Mammary epithelial cell (primary cell): ENCODE measurements at regions of chr18 and their contacts with region 1.

Region 1: GRCh38 chr18:72206814-72207213 is 337.3 kb downstream of the CBLN2 start:
- DNase-seq: no peak
- H3K4me3 ChIP-seq: no peak overlapping the region
- H3K27ac ChIP-seq: no peak overlapping the region
- H3K4me1 ChIP-seq: no peaks in the 10 kb centered on the region
- H3K27me3 ChIP-seq: no peaks in the 10 kb centered on the region
- CTCF ChIP-seq: no peak

Region 2: DNA sequence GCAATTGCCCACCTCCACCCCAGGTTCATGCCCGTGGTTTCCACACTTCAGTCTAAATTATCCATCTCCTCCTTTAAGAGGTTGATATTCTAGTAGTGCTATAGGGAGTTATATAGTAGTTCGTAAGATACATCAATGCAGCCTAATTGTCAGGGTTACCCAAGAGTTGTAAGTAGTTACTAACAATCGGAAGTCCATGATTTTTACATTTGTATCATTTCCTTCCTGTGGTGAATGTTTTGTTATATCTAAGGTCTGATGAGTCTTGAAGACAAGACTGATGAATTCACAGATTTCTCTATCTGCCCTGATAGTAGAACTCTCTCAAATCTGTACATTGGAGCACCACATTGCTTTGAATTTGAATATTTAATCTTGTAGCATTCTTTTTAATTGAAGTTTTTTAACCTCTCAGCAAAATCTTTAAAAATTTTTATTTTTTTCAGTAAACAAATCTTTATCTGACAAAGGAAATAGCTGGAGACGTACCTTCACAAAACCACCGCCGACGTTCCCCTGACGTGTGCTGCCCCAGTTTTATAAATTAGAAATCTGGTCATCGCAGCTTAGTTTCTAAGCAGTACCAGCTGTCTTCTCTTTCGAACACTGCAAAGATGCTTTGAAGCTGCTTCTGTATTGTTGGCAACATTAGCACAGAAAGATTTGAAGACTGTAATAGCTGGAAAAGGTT is 1653.4 kb before region 1 on chr18:
- CTCF ChIA-PET with region 1: no interaction called
- dilution Hi-C with region 1: loop called (anchors 10 kb)
- in situ Hi-C with region 1: no loop called
- intact Hi-C with region 1: no loop called
- DNase-seq: no peak
- H3K4me3 ChIP-seq: no peak overlapping the region
- H3K27ac ChIP-seq: no peak overlapping the region
- H3K4me1 ChIP-seq: no peaks in the 10 kb centered on the region
- H3K27me3 ChIP-seq: peaks cover 1% of the 10 kb centered on the region
- CTCF ChIP-seq: no peak

Region 3: GRCh38 chr18:70598406-70598805 is 1608.4 kb before region 1 on chr18:
- CTCF ChIA-PET with region 1: no interaction called
- dilution Hi-C with region 1: no loop called
- in situ Hi-C with region 1: no loop called
- intact Hi-C with region 1: loop called (anchors 5 kb)
- DNase-seq: no peak
- H3K4me3 ChIP-seq: no peak overlapping the region
- H3K27ac ChIP-seq: no peak overlapping the region
- H3K4me1 ChIP-seq: no peaks in the 10 kb centered on the region
- H3K27me3 ChIP-seq: no peaks in the 10 kb centered on the region
- CTCF ChIP-seq: no peak

Region 4: DNA sequence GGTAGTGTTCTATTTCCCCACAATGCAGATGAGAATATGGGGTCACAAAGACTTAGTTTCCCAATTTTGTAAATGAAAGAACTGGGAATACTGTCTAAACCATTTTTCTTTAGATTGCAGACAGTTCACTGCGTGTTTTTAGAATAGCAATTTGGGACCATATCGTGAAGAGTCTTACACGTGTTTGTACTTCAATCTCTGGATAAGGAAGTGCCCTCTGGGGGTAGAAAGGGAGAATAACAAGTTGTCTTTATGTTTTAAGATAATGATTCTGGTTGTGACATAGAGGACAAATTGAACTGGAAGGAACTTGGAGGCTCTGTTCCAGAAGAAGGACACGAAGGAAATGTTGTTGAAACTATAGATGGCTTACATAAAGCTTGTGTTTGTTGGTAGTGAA is 120.4 kb before region 1 on chr18:
- CTCF ChIA-PET with region 1: no interaction called
- dilution Hi-C with region 1: no loop called
- in situ Hi-C with region 1: no loop called
- intact Hi-C with region 1: loop called (anchors 1 kb)
- DNase-seq: no peak
- H3K4me3 ChIP-seq: no peak overlapping the region
- H3K27ac ChIP-seq: no peak overlapping the region
- H3K4me1 ChIP-seq: no peaks in the 10 kb centered on the region
- H3K27me3 ChIP-seq: no peaks in the 10 kb centered on the region
- CTCF ChIP-seq: peak in 1 of 2 donors; percentile 29